ENCODE measurements at regions of chr9 and their contacts with region 1.

Region 1: GRCh38 chr9:37994639-37995347 is 74.2 kb downstream of the SHB start:
- DNase-seq: peak; percentile 91
- ATAC-seq: peak; percentile 86

Region 2: DNA sequence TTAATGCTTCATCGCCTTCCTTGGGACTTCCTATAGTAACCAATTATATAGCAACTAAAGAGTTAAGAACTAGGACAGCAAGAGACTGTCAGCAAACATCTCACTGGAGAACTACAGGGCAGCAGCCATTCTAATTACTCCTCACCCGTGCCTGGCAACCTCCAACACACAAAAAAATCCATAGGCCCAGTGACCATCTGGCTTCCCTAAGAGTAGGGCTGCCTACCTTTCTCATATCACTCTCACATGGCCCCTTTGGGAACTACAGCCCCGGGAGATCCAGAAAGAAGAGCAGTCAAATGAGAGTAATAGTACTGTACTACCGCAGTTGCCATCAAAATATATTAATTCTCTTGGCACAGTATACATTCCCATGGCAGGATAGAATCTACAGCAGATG is 188.5 kb before region 1 on chr9:
- intact Hi-C with region 1: no loop called
- DNase-seq: no peak
- ATAC-seq: no peak

Region 3: GRCh38 chr9:38017149-38017884 is 22.5 kb after region 1 on chr9:
- intact Hi-C with region 1: loop called (anchors 1 kb)
- DNase-seq: no peak
- ATAC-seq: peak; percentile 72

Region 4: DNA sequence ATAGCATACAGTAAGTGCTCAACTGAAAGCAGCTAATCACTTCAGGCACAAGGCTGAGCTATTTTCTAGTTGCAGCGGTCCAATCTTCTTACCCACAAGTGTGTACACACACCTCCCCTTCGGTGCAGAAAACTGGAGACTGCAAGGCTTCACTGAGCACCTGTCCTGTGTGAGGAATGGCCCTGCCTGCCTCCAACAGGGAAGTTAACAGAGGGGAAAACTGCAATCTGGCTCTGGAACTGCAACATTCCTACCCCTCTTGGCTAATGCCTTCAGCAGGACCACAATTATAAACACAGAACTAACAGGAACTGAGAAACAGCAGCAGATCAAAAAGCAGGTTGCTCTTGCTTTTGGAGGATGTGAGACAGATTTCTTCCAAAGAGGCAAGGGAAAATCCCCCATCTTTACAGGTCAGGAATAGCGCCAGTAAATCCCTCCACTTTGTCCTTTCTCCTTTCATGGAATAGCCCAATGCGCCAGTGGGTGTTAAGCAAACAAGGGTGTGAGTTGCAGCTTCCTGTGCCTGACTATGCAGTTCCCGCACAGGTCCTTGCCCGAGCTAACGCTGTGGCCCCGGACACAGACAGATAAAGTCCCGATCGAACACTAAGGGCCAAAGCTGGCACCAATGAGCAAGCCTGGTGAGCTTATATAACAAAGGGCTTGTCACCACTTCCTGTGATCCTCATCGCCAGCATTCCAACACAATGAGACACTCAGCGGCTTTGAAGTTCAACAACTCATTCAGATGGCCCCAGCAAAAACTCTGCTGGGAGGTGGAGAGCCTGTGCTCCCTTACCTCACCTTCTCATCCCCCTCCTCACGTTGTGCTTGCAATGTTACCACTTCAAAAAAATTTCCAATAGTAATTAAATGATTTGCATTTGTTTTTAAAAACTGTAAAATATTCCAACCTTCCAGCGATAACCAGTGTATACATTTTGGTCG is 52.8 kb after region 1 on chr9:
- intact Hi-C with region 1: loop called (anchors 5 kb)
- DNase-seq: peak; percentile 82
- ATAC-seq: peak; percentile 88

Region 5: DNA sequence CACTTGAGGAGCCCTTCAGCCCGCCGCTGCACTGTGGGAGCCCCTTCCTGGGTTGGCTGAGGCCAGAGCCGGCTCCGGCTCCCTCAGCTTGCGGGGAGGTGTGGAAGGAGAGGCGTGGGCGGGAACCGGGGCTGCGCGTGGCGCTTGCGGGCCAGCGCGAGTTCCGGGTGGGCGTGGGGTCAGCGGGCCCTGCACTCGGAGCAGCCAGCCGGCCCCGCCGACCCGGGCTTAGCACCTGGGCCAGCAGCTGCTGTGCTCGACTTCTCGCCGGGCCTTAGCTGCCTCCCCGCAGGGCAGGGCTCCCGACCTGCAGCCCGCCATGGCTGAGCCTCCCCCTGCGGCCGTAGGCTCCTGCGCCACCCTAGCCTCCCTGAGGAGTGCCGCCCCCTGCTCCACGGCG is 80.5 kb after region 1 on chr9:
- intact Hi-C with region 1: no loop called
- DNase-seq: no peak
- ATAC-seq: no peak

Region 6: GRCh38 chr9:38117651-38118050 is 122.9 kb after region 1 on chr9:
- intact Hi-C with region 1: no loop called
- DNase-seq: no peak
- ATAC-seq: no peak